Natural killer cell (primary cell): ENCODE measurements at regions of chr12 and their contacts with region 1.

Region 1: GRCh38 chr12:25819691-25820090 is 138.8 kb upstream of the RASSF8 start:
- DNase-seq: no peak
- ATAC-seq: no peak
- H3K4me3 ChIP-seq: no peak overlapping the region
- H3K4me3 Mint-ChIP-seq: no peak overlapping the region
- H3K27ac ChIP-seq: no peak overlapping the region
- H3K27ac Mint-ChIP-seq: no peak overlapping the region
- H3K4me1 ChIP-seq: no peaks in the 10 kb centered on the region
- H3K4me1 Mint-ChIP-seq: no peaks in the 10 kb centered on the region
- H3K27me3 ChIP-seq: no peaks in the 10 kb centered on the region
- H3K27me3 Mint-ChIP-seq: peaks cover 0 to 6% of the 10 kb centered on the region in 2 donors
- CTCF ChIP-seq: no peak

Region 2: DNA sequence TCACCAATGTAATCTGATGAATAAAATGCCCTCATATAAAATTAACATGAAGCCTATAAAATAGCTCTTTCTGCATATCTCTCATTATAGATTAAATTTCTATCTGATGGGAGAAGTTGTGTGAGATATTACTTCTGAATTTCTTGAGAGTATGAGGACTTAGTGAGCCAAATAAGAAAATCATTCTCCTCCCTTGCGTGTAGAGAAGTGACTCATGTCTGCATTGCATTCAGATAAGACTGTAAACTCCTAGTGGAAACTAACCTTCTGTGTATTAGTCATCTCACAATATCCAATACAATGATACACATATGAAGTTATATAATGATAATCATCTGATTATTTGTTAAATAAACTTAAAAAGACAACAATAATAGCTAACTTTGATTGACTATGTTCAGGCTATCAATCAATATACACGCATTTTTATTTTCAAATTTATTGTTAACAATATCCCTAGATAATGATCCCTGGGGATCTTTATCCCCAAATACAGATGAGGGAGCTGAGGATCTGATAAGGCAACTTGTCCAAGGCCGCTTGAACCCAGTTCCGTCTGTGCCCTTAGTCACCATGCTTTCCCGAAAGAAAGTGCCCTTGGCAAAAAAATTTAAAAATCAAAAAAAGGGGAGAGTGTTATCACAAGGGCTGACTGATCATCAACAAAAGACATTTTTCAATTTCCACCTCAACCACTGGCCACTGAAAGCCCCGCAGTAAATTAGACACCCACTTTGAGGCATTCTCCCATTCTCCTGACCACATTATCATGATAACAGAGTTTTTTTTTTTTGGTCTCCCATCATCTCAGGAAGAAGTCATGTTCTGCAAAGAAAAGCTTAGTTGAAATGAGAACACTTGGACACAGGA is 50.4 kb before region 1 on chr12:
- intact Hi-C with region 1: loop called (anchors 2 kb)
- DNase-seq: no peak
- ATAC-seq: no peak
- H3K4me3 ChIP-seq: no peak overlapping the region
- H3K4me3 Mint-ChIP-seq: no peak overlapping the region
- H3K27ac ChIP-seq: no peak overlapping the region
- H3K27ac Mint-ChIP-seq: no peak overlapping the region
- H3K4me1 ChIP-seq: no peaks in the 10 kb centered on the region
- H3K4me1 Mint-ChIP-seq: no peaks in the 10 kb centered on the region
- H3K27me3 ChIP-seq: no peaks in the 10 kb centered on the region
- H3K27me3 Mint-ChIP-seq: no peaks in the 10 kb centered on the region
- CTCF ChIP-seq: no peak

Region 3: DNA sequence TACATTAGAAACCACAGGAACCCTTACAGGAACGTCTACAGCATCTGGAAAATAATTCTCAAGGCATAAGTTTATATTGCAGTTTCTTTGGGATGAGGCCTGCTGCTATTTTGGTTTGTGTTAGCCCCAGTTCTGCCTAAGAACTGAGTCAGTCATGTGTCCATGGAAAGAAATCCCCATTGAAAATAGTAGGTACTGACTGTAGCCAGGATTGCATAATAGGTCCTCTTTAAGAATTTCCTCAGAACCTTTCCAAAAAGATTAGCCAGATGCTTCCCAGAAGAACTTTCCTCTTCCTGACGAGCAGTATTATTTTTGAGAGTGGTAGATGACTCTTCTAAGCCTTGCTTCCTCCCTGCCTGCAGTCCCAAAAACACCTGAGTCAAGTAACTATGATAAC is 191.4 kb after region 1 on chr12:
- intact Hi-C with region 1: no loop called
- DNase-seq: no peak
- ATAC-seq: no peak
- H3K4me3 ChIP-seq: no peak overlapping the region
- H3K4me3 Mint-ChIP-seq: no peak overlapping the region
- H3K27ac ChIP-seq: no peak overlapping the region
- H3K27ac Mint-ChIP-seq: no peak overlapping the region
- H3K4me1 ChIP-seq: no peaks in the 10 kb centered on the region
- H3K4me1 Mint-ChIP-seq: peaks cover 0 to 4% of the 10 kb centered on the region in 2 donors
- H3K27me3 ChIP-seq: no peaks in the 10 kb centered on the region
- H3K27me3 Mint-ChIP-seq: peaks cover 0 to 1% of the 10 kb centered on the region in 2 donors
- CTCF ChIP-seq: no peak